Tibial artery (tissue), 4 donors: ENCODE measurements at regions of chr2 and their contacts with region 1.

Region 1: DNA sequence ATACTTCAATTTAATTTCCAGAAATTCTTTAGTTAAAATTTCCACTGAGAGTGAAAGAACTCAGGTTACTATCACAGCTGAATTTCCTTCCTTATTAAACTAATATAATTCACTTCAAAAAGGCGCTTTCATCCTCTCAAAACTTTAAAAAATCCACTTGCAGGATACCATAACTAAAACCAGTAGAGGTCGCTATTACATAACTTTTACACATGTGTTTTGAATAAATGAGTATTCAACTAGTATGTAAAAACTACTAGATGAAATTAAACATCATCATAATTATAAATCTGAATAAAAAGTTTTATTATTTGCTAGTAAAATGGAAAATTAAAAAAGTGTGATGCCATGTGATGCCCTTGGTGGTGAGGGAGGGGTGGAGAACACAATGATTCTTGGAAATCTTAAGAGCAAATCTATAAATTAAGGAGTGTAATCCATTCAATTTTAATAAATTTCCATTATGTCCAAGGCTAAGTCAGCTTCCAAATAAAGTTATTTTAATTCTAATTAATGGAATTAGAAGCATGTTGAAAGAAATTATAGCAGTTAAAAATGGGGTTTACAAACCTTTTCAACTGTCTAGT is 61.4 kb downstream of the SOS1 start:
- DNase-seq: no peak
- H3K4me3 ChIP-seq: no peak overlapping the region
- H3K27ac ChIP-seq: no peak overlapping the region
- H3K4me1 ChIP-seq: no peaks in the 10 kb centered on the region
- H3K27me3 ChIP-seq: no peaks in the 10 kb centered on the region
- CTCF ChIP-seq: peak; percentile 65 to 69

Region 2: DNA sequence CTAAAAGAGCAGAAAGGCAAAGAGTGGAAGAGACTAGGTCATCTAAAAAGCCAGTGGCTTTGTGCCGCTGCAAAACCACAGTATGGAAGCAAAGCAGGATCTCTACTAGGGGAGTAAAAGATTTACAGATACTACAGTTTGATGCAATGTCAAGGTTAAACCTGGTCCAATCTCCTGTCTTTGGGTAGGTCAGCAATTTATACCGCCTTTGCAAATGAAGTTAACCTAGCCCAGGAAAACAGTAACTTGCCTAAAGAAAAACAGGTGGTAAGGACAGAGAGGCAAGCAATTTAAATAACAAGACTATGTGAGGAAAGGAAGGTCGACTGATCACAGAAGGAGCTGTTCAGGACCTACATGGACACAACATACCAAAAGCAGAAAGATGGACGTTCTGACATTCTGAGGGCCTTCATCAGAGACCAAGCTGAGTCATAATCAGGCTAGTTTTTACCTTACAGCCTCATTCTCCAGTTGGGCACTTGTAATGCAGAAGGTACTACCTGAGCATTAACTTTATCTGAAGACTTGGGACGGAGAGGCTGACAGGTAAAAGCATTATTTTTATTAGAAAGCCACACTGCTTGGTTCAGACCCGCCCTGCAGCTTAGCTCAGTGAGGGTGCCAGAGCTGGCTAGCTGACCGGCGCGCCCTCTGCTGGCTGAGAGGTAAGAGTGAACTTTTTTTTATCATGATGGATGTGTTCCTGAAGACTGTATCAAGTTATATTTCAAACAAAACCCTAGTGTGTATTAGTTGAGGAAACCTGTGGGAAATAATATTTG is 168.4 kb after region 1 on chr2:
- intact Hi-C with region 1: loop called (anchors 2 kb)
- DNase-seq: peak; percentile 70 to 85
- H3K4me3 ChIP-seq: peak overlapping the region in 1 of 2 donors; percentile 10
- H3K27ac ChIP-seq: no peak overlapping the region
- H3K4me1 ChIP-seq: peaks cover 0 to 11% (median 3%) of the 10 kb centered on the region in 4 donors
- H3K27me3 ChIP-seq: no peaks in the 10 kb centered on the region
- CTCF ChIP-seq: peak; percentile 84 to 90

Region 3: DNA sequence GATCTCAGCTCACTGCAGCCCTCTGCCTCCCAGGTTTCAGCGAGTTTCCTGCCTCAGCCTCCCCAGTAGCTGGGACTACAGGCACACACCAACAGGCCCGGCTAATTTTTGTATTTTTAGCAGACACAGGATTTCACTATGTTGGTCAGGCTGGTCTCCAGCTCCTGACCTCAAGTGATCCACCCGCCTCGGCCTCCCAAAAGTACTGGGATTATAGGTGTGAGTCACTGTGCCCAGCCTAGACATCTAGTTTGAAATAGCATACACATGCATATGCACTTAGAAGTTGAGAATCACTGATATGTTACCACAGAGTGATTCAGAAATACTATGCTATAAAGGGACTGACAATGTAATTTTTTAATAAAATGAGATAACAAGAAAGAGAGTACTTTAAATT is 254.1 kb after region 1 on chr2:
- intact Hi-C with region 1: no loop called
- DNase-seq: no peak
- H3K4me3 ChIP-seq: no peak overlapping the region
- H3K27ac ChIP-seq: no peak overlapping the region
- H3K4me1 ChIP-seq: no peaks in the 10 kb centered on the region
- H3K27me3 ChIP-seq: no peaks in the 10 kb centered on the region
- CTCF ChIP-seq: no peak